Body of pancreas (tissue), 4 donors: ENCODE measurements at regions of chr19 and their contacts with region 1.

Region 1: DNA sequence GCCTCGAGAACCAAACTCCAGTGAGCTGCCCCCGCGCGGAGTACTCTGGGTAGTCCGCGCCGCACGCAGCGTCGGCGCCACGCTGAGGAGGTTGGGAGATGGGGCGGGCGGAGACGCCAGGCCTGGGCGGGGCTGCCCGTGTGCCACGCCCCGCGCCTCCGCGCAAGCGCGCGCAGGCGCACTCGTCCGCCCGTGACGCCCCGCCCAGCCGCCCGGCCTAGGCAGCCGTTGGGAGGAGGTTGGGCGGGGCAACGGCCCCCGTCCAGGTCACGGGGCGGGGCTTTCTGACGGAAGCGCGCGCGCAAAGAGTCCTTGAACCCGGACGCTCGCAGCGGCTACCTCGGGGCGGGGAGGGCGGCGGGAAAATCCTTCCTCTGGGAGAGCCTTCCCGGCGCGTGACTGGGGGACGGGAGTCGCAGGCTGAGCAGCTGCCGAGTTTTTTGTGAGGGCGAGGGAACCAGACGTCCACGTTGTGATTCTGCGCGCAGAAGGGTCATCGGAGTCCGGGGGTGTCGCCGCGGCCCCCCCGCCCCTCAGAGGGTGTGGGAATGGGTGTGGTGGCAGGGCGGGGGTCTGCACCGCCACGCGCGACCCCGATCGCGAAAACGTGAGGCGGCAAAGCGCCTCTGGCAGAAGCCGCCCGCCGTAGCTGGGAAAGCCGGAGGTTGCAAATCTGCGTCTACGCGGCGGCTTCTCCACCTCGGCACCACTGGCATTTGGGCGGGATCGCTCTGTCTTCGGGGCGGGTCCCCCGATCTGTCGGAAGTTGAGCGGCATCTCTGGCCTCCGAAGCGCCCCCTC is at the start of gene MED26:
- DNase-seq: peak; percentile 96 to 97 (median 96)
- ATAC-seq: peak; percentile 95
- H3K4me3 ChIP-seq: peak within 1 kb of the TSS; percentile 75 to 87
- H3K27ac ChIP-seq: peak within 1 kb of the TSS; percentile 92 to 98 (median 95)
- H3K4me1 ChIP-seq: peaks cover 41% of the 10 kb centered on the region
- H3K27me3 ChIP-seq: no peaks in the 10 kb centered on the region
- CTCF ChIP-seq: peak in 2 of 7 experiments; percentile 7 to 34
- POLR2A ChIP-seq: peak; percentile 3 to 79 (median 73)
- total RNA-seq, gene MED26: 4.9 to 8.2 TPM

Region 2: DNA sequence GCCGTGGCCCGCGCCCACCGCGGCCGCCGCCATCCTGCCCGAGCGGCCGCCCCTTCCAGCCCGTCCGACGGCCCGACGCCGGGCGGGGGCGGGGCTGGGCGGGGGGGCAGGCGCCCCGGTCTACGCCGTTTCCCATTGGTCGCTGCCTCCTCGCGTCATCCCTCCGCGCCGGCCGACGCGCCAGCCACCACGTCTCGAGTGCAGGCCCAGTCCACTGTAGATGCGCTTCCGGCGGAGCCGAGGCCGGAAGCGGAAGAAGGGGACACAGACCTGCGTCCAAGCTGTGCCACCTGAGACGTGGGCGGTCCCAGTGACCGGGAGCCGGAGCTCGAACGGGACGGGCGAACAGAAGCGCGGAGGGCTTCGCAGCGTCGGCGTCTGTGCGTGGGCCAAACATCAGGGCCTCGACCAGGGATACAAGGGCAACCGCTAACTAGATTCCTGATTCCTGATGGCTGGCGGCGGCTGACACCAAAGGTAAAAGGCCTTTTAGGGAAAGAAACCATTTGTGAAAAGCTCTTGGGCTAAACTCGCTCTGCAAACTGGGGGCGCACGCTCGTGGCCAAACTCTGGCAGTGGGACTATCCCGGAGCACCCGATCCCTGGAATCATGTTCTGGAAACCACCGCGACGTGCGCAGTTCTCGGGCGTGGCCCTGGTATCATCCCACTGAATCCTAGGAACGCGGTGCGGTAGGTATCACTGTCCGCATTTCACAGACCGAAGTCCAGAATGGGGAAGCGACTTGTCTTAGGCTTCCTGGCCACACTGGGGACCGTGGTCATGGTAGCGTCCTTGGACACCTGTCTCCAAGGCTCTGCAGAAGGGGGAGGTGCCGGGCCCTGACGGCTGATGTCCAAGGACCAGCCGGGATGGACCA is 55.8 kb before region 1 on chr19 and contains the start of gene SLC35E1:
- intact Hi-C with region 1: loop called (anchors 10 kb)
- DNase-seq: peak; percentile 97 to 98 (median 97)
- ATAC-seq: peak; percentile 96
- H3K4me3 ChIP-seq: peak within 1 kb of the TSS; percentile 79 to 86
- H3K27ac ChIP-seq: peak within 1 kb of the TSS; percentile 61 to 91 (median 84)
- H3K4me1 ChIP-seq: peaks cover 56% of the 10 kb centered on the region
- H3K27me3 ChIP-seq: no peaks in the 10 kb centered on the region
- CTCF ChIP-seq: no peak
- POLR2A ChIP-seq: peak; percentile 65 to 87 (median 87)
- total RNA-seq, gene SLC35E1: 27.0 to 66.3 TPM

Region 3: DNA sequence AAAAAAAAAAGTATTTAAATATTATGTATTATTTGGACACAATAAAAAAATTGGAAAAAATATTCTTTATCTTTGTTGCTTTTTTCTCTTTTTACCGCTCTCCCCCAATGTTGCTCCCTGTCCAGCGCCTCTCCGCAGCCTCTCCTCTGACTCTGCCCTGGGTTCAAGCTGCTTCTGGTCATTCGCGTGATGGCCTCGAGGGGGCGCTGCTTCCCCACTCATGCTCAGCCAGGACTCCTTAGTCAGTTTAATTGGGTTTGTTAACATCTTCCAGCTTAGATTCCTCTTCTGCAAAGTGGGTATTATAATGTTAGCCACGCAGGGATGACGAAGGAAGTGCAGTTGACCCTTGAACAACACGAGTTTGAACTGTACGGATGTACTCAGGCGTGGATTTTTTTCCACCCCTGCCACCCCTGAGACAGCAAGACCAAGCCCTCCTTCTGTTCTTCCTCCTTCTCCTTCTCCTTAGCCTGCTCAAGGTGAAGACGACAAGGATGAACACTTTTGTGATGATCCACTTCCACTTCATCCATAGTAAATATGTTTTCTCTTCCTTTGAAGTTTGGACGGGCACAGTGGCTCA is 86.4 kb after region 1 on chr19:
- intact Hi-C with region 1: no loop called
- DNase-seq: peak; percentile 27 to 49 (median 29)
- ATAC-seq: no peak
- H3K4me3 ChIP-seq: no peak overlapping the region
- H3K27ac ChIP-seq: no peak overlapping the region
- H3K4me1 ChIP-seq: peaks cover 10% of the 10 kb centered on the region
- H3K27me3 ChIP-seq: no peaks in the 10 kb centered on the region
- CTCF ChIP-seq: peak; percentile 24 to 78 (median 55)
- POLR2A ChIP-seq: no peak

Region 4: GRCh38 chr19:16764793-16765433 is 136.5 kb after region 1 on chr19:
- intact Hi-C with region 1: no loop called
- DNase-seq: no peak
- ATAC-seq: no peak
- H3K4me3 ChIP-seq: no peak overlapping the region
- H3K27ac ChIP-seq: no peak overlapping the region
- H3K4me1 ChIP-seq: no peaks in the 10 kb centered on the region
- H3K27me3 ChIP-seq: no peaks in the 10 kb centered on the region
- CTCF ChIP-seq: no peak
- POLR2A ChIP-seq: no peak